Stomach (tissue), 19 donors: ENCODE measurements at regions of chr13 and their contacts with region 1.

Region 1: DNA sequence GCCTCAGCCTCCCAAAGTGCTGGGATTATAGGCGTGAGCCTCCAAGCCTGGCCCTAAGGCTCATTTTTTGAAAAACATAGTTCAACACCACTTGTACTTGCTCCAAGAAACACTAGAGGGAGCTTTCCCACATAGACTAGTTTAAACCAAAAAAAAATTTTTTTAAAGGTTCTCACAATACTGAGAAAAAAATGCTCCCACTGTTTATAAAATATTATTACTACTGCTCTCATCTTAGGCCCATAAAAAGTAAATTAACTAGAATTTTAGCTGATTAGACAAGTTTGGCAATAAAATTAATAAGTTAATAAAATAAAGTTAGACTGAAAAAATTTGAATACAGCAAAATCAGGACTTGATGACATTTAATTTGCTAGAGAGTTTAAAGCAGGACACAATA is 109.5 kb downstream of the TBC1D4 start:
- DNase-seq: peak in 1 of 2 donors; percentile 76
- H3K4me3 ChIP-seq: no peak overlapping the region
- H3K27ac ChIP-seq: no peak overlapping the region
- H3K4me1 ChIP-seq: peaks cover 0 to 43% (median 8%) of the 10 kb centered on the region in 4 donors
- H3K27me3 ChIP-seq: no peaks in the 10 kb centered on the region
- CTCF ChIP-seq: peak in 5 of 7 experiments; percentile 22 to 76 (median 58)
- EP300 ChIP-seq: no peak
- POLR2A ChIP-seq: no peak

Region 2: DNA sequence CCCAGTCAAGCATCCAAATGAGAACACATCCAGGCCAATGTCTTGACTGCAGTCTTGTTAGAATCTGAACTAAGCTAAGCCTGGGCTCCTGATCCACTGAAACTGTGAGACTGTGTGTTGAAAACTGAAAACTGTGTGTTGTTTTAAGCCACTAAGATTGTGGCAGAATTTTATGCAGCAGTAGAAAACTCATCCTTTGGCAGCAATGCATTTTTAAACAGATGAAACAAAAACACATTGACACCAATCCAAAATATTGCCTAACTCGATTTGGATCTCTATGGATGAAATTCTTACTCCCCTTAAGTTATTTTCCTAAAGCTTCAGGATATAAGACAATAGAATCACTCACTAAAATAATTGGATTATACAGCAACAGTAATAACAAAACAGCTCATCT is 1036.0 kb before region 1 on chr13:
- intact Hi-C with region 1: no loop called
- DNase-seq: no peak
- H3K4me3 ChIP-seq: no peak overlapping the region
- H3K27ac ChIP-seq: no peak overlapping the region
- H3K4me1 ChIP-seq: no peaks in the 10 kb centered on the region
- H3K27me3 ChIP-seq: no peaks in the 10 kb centered on the region
- CTCF ChIP-seq: no peak
- EP300 ChIP-seq: no peak
- POLR2A ChIP-seq: no peak

Region 3: GRCh38 chr13:75482070-75482819 is 109.7 kb after region 1 on chr13 and contains the start of gene TBC1D4:
- intact Hi-C with region 1: loop called (anchors 10 kb)
- DNase-seq: peak; percentile 83 to 95
- H3K4me3 ChIP-seq: peak within 1 kb of the TSS; percentile 89 to 99 (median 92)
- H3K27ac ChIP-seq: peak within 1 kb of the TSS; percentile 77 to 95 (median 85)
- H3K4me1 ChIP-seq: peaks cover 7 to 43% (median 20%) of the 10 kb centered on the region in 4 donors
- H3K27me3 ChIP-seq: peaks cover 0 to 14% (median 0%) of the 10 kb centered on the region in 3 donors
- CTCF ChIP-seq: peak in 5 of 7 experiments; percentile 38 to 82 (median 70)
- EP300 ChIP-seq: no peak
- POLR2A ChIP-seq: no peak
- total RNA-seq, gene TBC1D4: 26.8 to 47.8 (median 39.1) TPM